MCF 10A (cell line): ENCODE measurements at regions of chr11 and their contacts with region 1.

Region 1: DNA sequence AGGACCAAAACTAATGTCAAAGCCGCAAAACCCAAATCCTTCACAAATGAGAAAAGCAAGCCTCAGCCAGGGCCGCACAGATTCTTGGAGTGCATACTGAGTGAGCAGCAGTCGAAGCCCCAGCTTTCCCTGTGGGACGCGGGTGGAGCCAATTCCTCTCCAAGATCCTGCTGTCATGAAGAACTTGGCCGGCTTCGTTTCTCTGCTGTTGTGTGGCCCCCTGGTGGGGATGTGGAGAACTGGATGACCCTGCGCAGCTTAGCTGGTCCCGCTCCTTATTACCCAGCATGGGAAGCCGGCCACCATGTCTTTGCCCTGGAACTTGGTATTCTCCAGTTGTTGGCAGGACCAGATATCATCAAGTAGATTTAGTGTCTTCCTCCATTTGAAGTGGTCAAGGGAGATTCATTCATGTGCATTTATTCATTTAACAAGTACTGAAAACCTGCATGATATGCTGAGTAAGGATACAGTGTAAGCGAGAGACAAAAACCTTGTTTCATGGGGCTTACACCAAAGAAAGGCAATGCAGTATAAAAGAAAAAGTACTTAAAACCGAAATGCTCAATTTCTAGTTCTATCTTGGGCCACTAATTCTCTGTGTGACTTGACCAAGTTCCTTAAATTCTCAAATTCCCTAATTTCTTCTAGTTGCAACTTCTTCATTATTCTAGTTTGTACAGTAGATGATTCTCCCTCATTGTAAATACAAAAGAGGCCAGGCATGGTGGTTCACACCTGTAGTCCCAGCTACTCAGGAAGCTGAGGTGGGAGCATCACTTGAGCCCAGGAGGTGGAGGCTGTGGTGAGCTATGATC is 56.7 kb upstream of the CRTAM start:
- DNase-seq: peak; percentile 86
- H3K4me3 Mint-ChIP-seq: no peak overlapping the region
- H3K27ac Mint-ChIP-seq: no peak overlapping the region
- H3K4me1 Mint-ChIP-seq: peaks cover 12% of the 10 kb centered on the region
- H3K27me3 Mint-ChIP-seq: no peaks in the 10 kb centered on the region
- CTCF ChIP-seq: peak; percentile 86

Region 2: DNA sequence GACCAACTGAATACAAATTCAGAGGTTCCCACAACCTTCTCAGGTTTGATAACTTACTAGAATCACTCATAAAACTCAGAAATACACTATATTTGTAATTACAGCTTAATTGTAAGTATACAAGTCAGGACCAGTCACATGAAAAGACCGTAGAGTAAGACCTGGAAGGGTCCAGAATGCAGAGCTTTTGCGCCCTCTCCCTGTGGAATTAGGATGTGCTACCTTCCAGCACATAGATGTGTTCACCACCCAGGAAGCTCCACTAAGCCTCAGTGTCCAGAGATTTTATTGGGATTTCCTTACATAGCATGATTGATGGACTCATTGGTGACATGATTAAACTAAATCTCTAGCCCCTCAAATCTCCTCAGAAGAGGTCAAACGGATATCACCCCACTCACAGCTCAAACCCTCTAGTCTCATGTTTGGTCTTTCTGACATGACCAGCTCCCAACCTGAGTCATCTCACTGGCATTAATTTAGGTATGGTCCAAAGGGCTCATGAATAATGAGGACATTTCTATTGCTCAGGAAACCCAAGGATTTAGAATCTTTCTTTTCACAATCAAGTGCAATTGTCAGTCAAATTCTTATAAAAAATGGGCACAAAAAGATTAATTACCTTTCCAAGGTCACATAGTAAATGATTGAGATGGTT is 203.3 kb before region 1 on chr11:
- CTCF ChIA-PET with region 1: interaction called, 75 read pairs
- POLR2A ChIA-PET with region 1: interaction called, 7 read pairs
- intact Hi-C with region 1: loop called (anchors 1 kb)
- DNase-seq: peak; percentile 11
- H3K4me3 Mint-ChIP-seq: no peak overlapping the region
- H3K27ac Mint-ChIP-seq: no peak overlapping the region
- H3K4me1 Mint-ChIP-seq: peaks cover 15% of the 10 kb centered on the region
- H3K27me3 Mint-ChIP-seq: no peaks in the 10 kb centered on the region
- CTCF ChIP-seq: no peak

Region 3: DNA sequence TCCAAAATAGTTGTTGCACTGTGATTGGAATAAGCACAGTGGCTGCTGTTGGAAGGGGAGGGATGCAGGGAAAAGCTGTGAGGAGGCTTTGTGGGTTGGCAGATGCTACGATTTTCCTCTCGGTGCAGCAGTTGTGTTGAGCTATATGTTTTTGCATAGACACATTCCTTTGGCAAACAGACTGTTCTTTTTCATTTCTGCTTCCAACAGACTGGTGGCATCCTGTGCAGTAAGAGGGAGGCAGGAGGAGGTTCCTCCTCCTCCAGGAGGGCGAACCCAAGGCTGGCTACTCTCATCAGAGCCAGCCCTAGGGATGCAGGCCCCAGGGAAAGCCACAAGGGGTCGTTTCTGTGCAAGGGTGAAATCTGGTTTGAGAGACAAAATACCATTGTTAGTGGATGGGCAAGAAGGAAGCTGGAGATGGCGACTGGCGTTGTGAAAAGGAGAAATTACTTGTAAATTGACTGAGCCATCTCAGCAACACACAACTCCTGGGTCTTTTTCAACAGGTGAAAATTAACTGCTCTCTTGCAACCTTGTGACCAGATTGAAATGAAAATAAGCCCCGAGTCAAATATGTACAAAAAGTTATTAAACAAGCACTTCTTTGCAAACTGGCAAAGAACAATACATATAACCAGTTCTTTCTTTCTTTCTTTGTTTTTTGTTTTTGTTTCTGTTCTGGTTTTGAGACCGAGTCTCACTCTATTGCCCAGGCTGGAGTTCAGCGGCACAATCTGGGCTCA is 152.6 kb before region 1 on chr11:
- CTCF ChIA-PET with region 1: interaction called, 112 read pairs
- POLR2A ChIA-PET with region 1: interaction called, 4 read pairs
- intact Hi-C with region 1: loop called (anchors 1 kb)
- DNase-seq: peak; percentile 82
- H3K4me3 Mint-ChIP-seq: no peak overlapping the region
- H3K27ac Mint-ChIP-seq: no peak overlapping the region
- H3K4me1 Mint-ChIP-seq: peaks cover 18% of the 10 kb centered on the region
- H3K27me3 Mint-ChIP-seq: no peaks in the 10 kb centered on the region
- CTCF ChIP-seq: peak; percentile 83

Region 4: GRCh38 chr11:122655527-122656072 is 126.0 kb before region 1 on chr11 and contains the start of gene UBASH3B:
- CTCF ChIA-PET with region 1: interaction called, 12 read pairs
- POLR2A ChIA-PET with region 1: interaction called, 4 read pairs
- intact Hi-C with region 1: loop called (anchors 1 kb)
- DNase-seq: peak; percentile 90
- H3K4me3 Mint-ChIP-seq: peak within 1 kb of the TSS; percentile 77
- H3K27ac Mint-ChIP-seq: peak within 1 kb of the TSS; percentile 64
- H3K4me1 Mint-ChIP-seq: peaks cover 5% of the 10 kb centered on the region
- H3K27me3 Mint-ChIP-seq: no peaks in the 10 kb centered on the region
- CTCF ChIP-seq: no peak
- total RNA-seq, gene UBASH3B: 6.2 and 10.3 TPM in 2 replicates

Region 5: GRCh38 chr11:122661182-122661945 is 120.2 kb before region 1 on chr11:
- CTCF ChIA-PET with region 1: interaction called, 12 read pairs
- POLR2A ChIA-PET with region 1: interaction called, 4 read pairs
- intact Hi-C with region 1: no loop called
- DNase-seq: peak; percentile 51
- H3K4me3 Mint-ChIP-seq: no peak overlapping the region
- H3K27ac Mint-ChIP-seq: no peak overlapping the region
- H3K4me1 Mint-ChIP-seq: peaks cover 10% of the 10 kb centered on the region
- H3K27me3 Mint-ChIP-seq: no peaks in the 10 kb centered on the region
- CTCF ChIP-seq: no peak

Region 6: DNA sequence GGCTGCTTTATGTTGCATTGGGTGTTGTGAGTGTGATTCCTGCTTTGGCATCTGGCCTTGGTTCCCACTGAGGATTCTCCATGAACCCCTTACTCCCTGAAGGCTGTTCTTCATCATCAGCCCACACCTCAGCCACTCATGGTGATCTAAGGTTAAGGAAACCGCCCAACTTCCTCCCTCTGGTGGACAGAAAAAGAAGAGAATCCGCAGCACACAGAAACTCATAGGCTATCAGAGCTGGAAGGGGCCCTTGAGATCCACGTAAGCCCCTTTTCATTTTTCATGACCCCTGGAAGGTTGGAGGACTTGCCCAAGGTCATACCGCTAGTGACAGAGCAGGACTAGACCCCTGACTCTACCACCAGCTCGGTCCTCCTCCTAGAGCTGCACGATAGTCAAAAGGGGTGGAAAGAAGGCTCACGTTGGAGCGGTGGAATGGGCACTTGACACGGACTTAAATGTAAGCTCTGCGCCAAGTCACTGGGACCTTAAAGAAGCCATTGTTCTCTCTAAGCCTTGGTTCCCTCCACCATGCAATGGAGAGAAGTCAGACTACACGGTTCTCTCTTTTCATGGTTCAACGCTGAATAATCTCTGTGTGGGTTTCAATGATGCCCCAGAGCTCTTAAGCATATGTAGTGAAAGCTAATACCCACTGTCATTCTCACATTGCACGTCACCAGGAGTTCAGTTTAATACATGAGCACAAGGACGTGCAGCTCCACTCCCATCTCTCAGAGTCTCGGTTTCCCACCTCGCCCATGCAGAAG is 26.8 kb before region 1 on chr11:
- CTCF ChIA-PET with region 1: interaction called, 17 read pairs
- POLR2A ChIA-PET with region 1: no interaction called
- intact Hi-C with region 1: no loop called
- DNase-seq: no peak
- H3K4me3 Mint-ChIP-seq: no peak overlapping the region
- H3K27ac Mint-ChIP-seq: no peak overlapping the region
- H3K4me1 Mint-ChIP-seq: peaks cover 5% of the 10 kb centered on the region
- H3K27me3 Mint-ChIP-seq: no peaks in the 10 kb centered on the region
- CTCF ChIP-seq: peak; percentile 26

Region 7: DNA sequence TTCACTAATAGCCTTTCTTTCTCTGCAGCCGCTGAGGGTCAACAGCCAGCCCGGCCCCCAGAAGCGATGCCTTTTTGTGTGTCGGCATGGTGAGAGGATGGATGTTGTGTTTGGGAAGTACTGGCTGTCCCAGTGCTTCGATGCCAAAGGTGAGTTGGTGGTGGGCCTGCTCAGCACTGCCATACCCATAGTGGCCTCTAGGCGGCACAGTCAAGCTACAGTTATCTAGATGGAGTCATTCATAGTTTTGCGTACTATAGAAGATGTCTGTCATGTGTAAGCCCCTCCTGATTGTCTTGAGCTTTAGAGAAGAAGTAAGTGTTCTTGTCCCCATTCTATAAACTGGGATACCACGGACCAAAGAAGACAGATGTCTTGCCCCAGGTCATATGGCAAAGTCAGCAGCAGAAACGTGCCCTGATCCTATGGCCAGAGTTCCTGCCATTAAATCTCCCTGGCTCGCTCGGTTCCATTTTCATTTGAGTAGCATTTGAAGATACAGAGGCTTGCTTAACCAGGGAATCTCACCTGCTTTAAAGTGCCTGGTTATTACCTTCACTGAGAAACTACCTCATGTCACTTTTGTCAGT is 14.6 kb after region 1 on chr11:
- CTCF ChIA-PET with region 1: interaction called, 32 read pairs
- POLR2A ChIA-PET with region 1: no interaction called
- intact Hi-C with region 1: no loop called
- DNase-seq: peak; percentile 62
- H3K4me3 Mint-ChIP-seq: no peak overlapping the region
- H3K27ac Mint-ChIP-seq: no peak overlapping the region
- H3K4me1 Mint-ChIP-seq: peaks cover 10% of the 10 kb centered on the region
- H3K27me3 Mint-ChIP-seq: no peaks in the 10 kb centered on the region
- CTCF ChIP-seq: peak; percentile 94

Region 8: GRCh38 chr11:122872051-122872450 is 90.5 kb after region 1 on chr11:
- CTCF ChIA-PET with region 1: no interaction called
- POLR2A ChIA-PET with region 1: no interaction called
- intact Hi-C with region 1: no loop called
- DNase-seq: no peak
- H3K4me3 Mint-ChIP-seq: no peak overlapping the region
- H3K27ac Mint-ChIP-seq: no peak overlapping the region
- H3K4me1 Mint-ChIP-seq: no peaks in the 10 kb centered on the region
- H3K27me3 Mint-ChIP-seq: no peaks in the 10 kb centered on the region
- CTCF ChIP-seq: no peak